Common myeloid progenitor, CD34-positive (primary cell): ENCODE measurements at regions of chr6 and their contacts with region 1.

Region 1: GRCh38 chr6:143427109-143427817 is 23.2 kb downstream of the ADAT2 start:
- DNase-seq: peak; percentile 72 to 89 (median 88)
- H3K4me3 ChIP-seq: no peak overlapping the region
- H3K27ac ChIP-seq: no peak overlapping the region
- H3K4me1 ChIP-seq: no peaks in the 10 kb centered on the region
- H3K27me3 ChIP-seq: no peaks in the 10 kb centered on the region

Region 2: GRCh38 chr6:142474531-142475289 is 952.6 kb before region 1 on chr6:
- CTCF ChIA-PET with region 1: interaction called, 31 read pairs
- POLR2A ChIA-PET with region 1: no interaction called
- DNase-seq: peak; percentile 49 to 67 (median 62)
- H3K4me3 ChIP-seq: no peak overlapping the region
- H3K27ac ChIP-seq: no peak overlapping the region
- H3K4me1 ChIP-seq: peaks cover 0 to 10% (median 0%) of the 10 kb centered on the region in 4 experiments
- H3K27me3 ChIP-seq: no peaks in the 10 kb centered on the region

Region 3: GRCh38 chr6:143187238-143187923 is 239.9 kb before region 1 on chr6:
- CTCF ChIA-PET with region 1: no interaction called
- POLR2A ChIA-PET with region 1: no interaction called
- DNase-seq: no peak
- H3K4me3 ChIP-seq: no peak overlapping the region
- H3K27ac ChIP-seq: no peak overlapping the region
- H3K4me1 ChIP-seq: no peaks in the 10 kb centered on the region
- H3K27me3 ChIP-seq: no peaks in the 10 kb centered on the region

Region 4: GRCh38 chr6:143232849-143233248 is 194.4 kb before region 1 on chr6:
- CTCF ChIA-PET with region 1: interaction called, 23 read pairs
- POLR2A ChIA-PET with region 1: no interaction called
- DNase-seq: peak; percentile 38 to 64 (median 59)
- H3K4me3 ChIP-seq: no peak overlapping the region
- H3K27ac ChIP-seq: no peak overlapping the region
- H3K4me1 ChIP-seq: no peaks in the 10 kb centered on the region
- H3K27me3 ChIP-seq: no peaks in the 10 kb centered on the region

Region 5: GRCh38 chr6:143441680-143442545 is 14.7 kb after region 1 on chr6:
- CTCF ChIA-PET with region 1: interaction called, 11 read pairs
- POLR2A ChIA-PET with region 1: no interaction called
- DNase-seq: peak in 1 of 3 donors; percentile 10
- H3K4me3 ChIP-seq: no peak overlapping the region
- H3K27ac ChIP-seq: no peak overlapping the region
- H3K4me1 ChIP-seq: no peaks in the 10 kb centered on the region
- H3K27me3 ChIP-seq: no peaks in the 10 kb centered on the region

Region 6: GRCh38 chr6:143731789-143732188 is 304.5 kb after region 1 on chr6:
- CTCF ChIA-PET with region 1: no interaction called
- POLR2A ChIA-PET with region 1: no interaction called
- DNase-seq: peak; percentile 16 to 55 (median 50)
- H3K4me3 ChIP-seq: peak overlapping the region in 2 of 7 experiments; percentile 5 to 8
- H3K27ac ChIP-seq: peak overlapping the region in 1 of 2 experiments; percentile 58
- H3K4me1 ChIP-seq: peaks cover 10 to 32% (median 23%) of the 10 kb centered on the region in 4 experiments
- H3K27me3 ChIP-seq: no peaks in the 10 kb centered on the region